Calu3 (cell line): ENCODE measurements at regions of chr10 and their contacts with region 1.

Region 1: GRCh38 chr10:62268399-62269114 is at the start of gene RTKN2:
- DNase-seq: peak; percentile 96
- H3K4me3 Mint-ChIP-seq: peak within 1 kb of the TSS; percentile 77
- H3K27ac Mint-ChIP-seq: peak within 1 kb of the TSS; percentile 93
- H3K4me1 Mint-ChIP-seq: peaks cover 44% of the 10 kb centered on the region
- H3K27me3 Mint-ChIP-seq: no peaks in the 10 kb centered on the region
- CTCF ChIP-seq: no peak
- total RNA-seq, gene RTKN2: 25.0 and 26.7 TPM in 2 replicates

Region 2: GRCh38 chr10:62250594-62251198 is 17.9 kb before region 1 on chr10:
- CTCF ChIA-PET with region 1: interaction called, 11 read pairs
- intact Hi-C with region 1: no loop called
- DNase-seq: peak; percentile 48
- H3K4me3 Mint-ChIP-seq: no peak overlapping the region
- H3K27ac Mint-ChIP-seq: peak overlapping the region; percentile 21
- H3K4me1 Mint-ChIP-seq: peaks cover 41% of the 10 kb centered on the region
- H3K27me3 Mint-ChIP-seq: no peaks in the 10 kb centered on the region
- CTCF ChIP-seq: no peak

Region 3: DNA sequence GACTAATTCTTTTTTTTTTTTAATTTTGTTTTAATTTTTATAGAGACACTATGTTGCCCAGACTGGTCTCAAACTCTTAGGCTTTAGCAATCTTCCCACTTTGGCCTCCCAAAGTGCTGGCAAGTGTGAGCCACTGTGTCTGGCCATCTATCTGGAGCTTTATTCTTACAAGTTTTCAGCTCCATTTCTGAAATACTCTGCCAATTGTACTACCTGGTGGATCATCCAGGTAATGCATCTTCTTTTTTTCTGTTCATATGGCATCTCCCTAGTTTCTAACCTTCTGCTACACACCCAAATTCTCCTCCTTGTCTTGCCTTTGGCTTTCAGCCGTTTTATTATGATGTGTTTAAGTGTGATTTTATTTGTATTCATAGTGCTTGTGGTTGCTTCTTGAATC is 145.8 kb after region 1 on chr10:
- CTCF ChIA-PET with region 1: interaction called, 20 read pairs
- intact Hi-C with region 1: loop called (anchors 1 kb)
- DNase-seq: no peak
- H3K4me3 Mint-ChIP-seq: no peak overlapping the region
- H3K27ac Mint-ChIP-seq: no peak overlapping the region
- H3K4me1 Mint-ChIP-seq: no peaks in the 10 kb centered on the region
- H3K27me3 Mint-ChIP-seq: no peaks in the 10 kb centered on the region
- CTCF ChIP-seq: peak; percentile 31

Region 4: GRCh38 chr10:62437696-62438095 is 169.1 kb after region 1 on chr10:
- CTCF ChIA-PET with region 1: interaction called, 4 read pairs
- intact Hi-C with region 1: loop called (anchors 2 kb)
- DNase-seq: peak; percentile 59
- H3K4me3 Mint-ChIP-seq: no peak overlapping the region
- H3K27ac Mint-ChIP-seq: no peak overlapping the region
- H3K4me1 Mint-ChIP-seq: peaks cover 32% of the 10 kb centered on the region
- H3K27me3 Mint-ChIP-seq: no peaks in the 10 kb centered on the region
- CTCF ChIP-seq: peak; percentile 70

Region 5: DNA sequence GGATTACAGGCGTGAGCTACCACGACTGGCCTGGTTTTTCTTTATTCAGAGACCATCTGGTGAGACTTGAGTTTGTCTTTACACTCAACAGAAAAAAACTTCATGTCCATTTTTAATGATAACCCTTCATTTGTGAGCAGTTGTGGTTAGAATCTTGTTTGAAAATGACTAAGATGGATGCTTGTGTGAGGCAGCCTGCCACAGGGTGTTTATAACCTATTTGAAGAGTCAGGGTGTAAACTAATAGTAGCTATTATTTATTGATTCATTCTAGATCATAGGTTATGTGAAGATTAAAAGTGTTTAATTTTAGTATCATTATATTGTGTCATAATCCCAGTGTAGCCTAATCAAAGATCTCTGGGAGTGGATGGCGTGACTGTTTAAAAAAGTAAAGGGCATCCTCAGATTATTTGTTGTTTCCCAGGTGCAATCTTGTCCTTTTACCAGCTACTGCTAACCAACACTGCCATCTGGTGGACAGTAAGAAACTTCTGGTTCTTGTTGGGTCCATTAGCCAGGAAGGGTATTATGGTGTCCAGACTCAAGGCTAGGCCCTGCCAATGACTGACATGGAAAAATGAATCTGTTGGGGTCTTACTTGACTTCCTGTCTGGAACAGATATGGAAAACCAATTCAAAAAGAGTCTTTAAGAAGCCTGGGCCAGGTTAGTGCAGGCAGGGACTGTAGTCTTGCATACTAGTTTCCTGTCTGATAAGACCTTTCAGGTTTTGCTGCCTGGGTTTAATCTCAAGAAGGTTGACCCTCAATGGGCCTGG is 889.5 kb after region 1 on chr10:
- CTCF ChIA-PET with region 1: interaction called, 3 read pairs
- intact Hi-C with region 1: loop called (anchors 10 kb)
- DNase-seq: peak; percentile 59
- H3K4me3 Mint-ChIP-seq: no peak overlapping the region
- H3K27ac Mint-ChIP-seq: no peak overlapping the region
- H3K4me1 Mint-ChIP-seq: no peaks in the 10 kb centered on the region
- H3K27me3 Mint-ChIP-seq: no peaks in the 10 kb centered on the region
- CTCF ChIP-seq: peak; percentile 82